Aorta (tissue), 5 donors: ENCODE measurements at regions of chr11 and their contacts with region 1.

Region 1: GRCh38 chr11:62857541-62857982 is 18.2 kb upstream of the WDR74 start:
- DNase-seq: no peak
- ATAC-seq: no peak
- H3K4me3 ChIP-seq: no peak overlapping the region
- H3K27ac ChIP-seq: no peak overlapping the region
- H3K4me1 ChIP-seq: no peaks in the 10 kb centered on the region
- H3K27me3 ChIP-seq: no peaks in the 10 kb centered on the region

Region 2: GRCh38 chr11:62383822-62384221 is 473.7 kb before region 1 on chr11:
- intact Hi-C with region 1: loop called in 1 of 2 experiments (anchors 5 kb)
- DNase-seq: no peak
- ATAC-seq: no peak
- H3K4me3 ChIP-seq: no peak overlapping the region
- H3K27ac ChIP-seq: no peak overlapping the region
- H3K4me1 ChIP-seq: no peaks in the 10 kb centered on the region
- H3K27me3 ChIP-seq: no peaks in the 10 kb centered on the region

Region 3: GRCh38 chr11:62394825-62395538 is 462.6 kb before region 1 on chr11:
- intact Hi-C with region 1: loop called in 1 of 2 experiments (anchors 10 kb)
- DNase-seq: peak; percentile 91 to 93
- ATAC-seq: peak; percentile 86
- H3K4me3 ChIP-seq: no peak overlapping the region
- H3K27ac ChIP-seq: peak overlapping the region in 1 of 2 donors; percentile 60
- H3K4me1 ChIP-seq: peaks cover 0 to 5% of the 10 kb centered on the region in 2 donors
- H3K27me3 ChIP-seq: no peaks in the 10 kb centered on the region

Region 4: DNA sequence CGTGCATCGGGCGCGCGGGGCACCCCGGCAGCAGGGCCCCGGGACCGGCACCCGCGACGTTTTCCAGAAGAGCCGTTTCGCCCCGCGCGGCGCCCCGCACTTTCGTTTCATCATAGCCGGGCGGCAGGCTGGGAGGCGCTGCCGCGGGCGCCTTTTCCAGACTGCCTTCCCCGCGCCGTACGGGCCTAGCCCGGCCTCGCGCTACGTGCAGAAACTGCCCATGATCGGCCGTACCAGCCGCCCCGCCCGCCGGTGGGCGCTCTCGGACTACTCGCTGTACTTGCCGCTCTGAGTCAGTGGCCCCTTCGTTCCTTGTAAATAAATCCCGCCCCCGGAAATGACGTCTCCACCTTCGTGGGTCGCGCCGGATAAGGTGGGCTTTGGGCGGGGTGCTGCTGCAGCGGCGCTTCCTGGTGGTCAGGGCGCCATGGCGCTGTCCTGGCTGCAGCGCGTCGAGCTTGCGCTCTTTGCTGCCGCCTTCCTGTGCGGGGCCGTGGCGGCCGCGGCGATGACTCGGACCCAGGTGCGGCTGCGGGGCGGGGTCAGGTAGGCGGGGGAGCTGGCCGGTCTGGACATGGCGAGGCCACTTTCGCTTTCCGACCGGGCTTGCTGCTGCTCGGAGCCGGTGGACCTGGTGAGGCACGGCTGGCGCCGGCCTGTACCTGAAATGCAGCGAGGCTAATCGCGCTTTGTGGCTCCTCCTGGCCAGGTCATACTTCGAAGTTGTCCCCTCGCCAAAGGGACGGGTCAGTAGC is 70.4 kb before region 1 on chr11 and contains the start of gene TMEM179B:
- intact Hi-C with region 1: loop called (anchors 1 kb)
- DNase-seq: peak; percentile 99
- ATAC-seq: peak; percentile 95
- H3K4me3 ChIP-seq: peak within 1 kb of the TSS; percentile 78 to 96
- H3K27ac ChIP-seq: peak within 1 kb of the TSS; percentile 72 to 85
- H3K4me1 ChIP-seq: no peaks in the 10 kb centered on the region
- H3K27me3 ChIP-seq: no peaks in the 10 kb centered on the region
- total RNA-seq, gene TMEM179B: 26.8 to 31.0 TPM

Region 5: DNA sequence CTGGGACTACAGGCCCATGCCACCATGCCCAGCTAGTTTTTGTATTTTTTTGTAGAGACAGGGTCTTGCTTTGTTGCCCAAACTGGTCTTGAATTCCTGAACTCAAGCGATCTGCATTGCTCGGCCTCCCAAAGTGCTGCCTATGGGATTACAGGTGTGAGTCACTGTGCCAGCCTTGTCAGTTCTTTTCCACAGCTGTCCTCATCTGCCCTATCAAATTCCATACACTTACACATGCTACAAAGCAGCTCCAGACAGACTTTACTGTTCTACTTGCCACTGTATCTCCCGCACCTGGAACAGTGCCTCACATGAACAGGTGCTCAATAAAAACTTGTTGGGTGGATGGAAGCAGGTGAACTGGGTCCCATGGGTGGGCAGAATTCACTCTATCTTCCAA is 33.9 kb before region 1 on chr11:
- intact Hi-C with region 1: no loop called
- DNase-seq: no peak
- ATAC-seq: no peak
- H3K4me3 ChIP-seq: no peak overlapping the region
- H3K27ac ChIP-seq: no peak overlapping the region
- H3K4me1 ChIP-seq: no peaks in the 10 kb centered on the region
- H3K27me3 ChIP-seq: no peaks in the 10 kb centered on the region